IMR-90 (cell line): ENCODE measurements at regions of chr5 and their contacts with region 1.

Region 1: GRCh38 chr5:77143998-77144836 is 57.1 kb upstream of the ZBED3 start:
- DNase-seq: peak; percentile 79
- ATAC-seq: peak; percentile 98
- H3K4me3 ChIP-seq: no peak overlapping the region
- H3K27ac ChIP-seq: no peak overlapping the region
- H3K4me1 ChIP-seq: no peaks in the 10 kb centered on the region
- H3K27me3 ChIP-seq: peaks cover 2% of the 10 kb centered on the region; the same call in 1 of the 2 replicates
- CTCF ChIP-seq: peak; percentile 92
- POLR2A ChIP-seq: no peak
- RAD21 ChIP-seq: peak; percentile 95

Region 2: GRCh38 chr5:77239126-77239741 is 95.0 kb after region 1 on chr5:
- CTCF ChIA-PET with region 1: no interaction called
- POLR2A ChIA-PET with region 1: no interaction called
- dilution Hi-C with region 1: no loop called
- in situ Hi-C with region 1: no loop called
- intact Hi-C with region 1: loop called (anchors 1 kb)
- DNase-seq: no peak
- ATAC-seq: no peak
- H3K4me3 ChIP-seq: no peak overlapping the region
- H3K27ac ChIP-seq: no peak overlapping the region
- H3K4me1 ChIP-seq: no peaks in the 10 kb centered on the region
- H3K27me3 ChIP-seq: peaks cover 14% of the 10 kb centered on the region
- CTCF ChIP-seq: peak; percentile 26; the same call in 1 of the 2 replicates
- POLR2A ChIP-seq: no peak
- RAD21 ChIP-seq: peak; percentile 26

Region 3: DNA sequence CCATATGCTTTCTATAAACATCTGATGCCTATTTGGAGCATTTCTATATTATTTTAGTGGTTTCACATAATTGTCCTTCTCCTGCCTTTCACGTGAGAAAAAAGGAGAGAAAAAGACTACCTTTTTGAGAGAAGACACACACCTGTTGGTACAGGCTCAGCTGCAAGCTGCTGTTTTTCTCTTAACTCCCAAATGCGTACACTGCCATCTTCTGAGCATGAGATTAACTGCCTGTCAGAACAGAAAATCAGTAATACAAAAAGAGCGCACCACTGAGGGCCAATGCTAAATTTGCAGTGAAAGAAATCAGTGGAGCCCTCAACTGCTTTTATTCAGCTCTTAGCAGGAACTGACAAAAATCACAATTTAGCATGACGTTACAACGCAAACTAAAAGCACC is 293.0 kb after region 1 on chr5:
- CTCF ChIA-PET with region 1: no interaction called
- POLR2A ChIA-PET with region 1: no interaction called
- dilution Hi-C with region 1: no loop called
- in situ Hi-C with region 1: no loop called
- intact Hi-C with region 1: loop called (anchors 5 kb)
- DNase-seq: no peak
- ATAC-seq: no peak
- H3K4me3 ChIP-seq: no peak overlapping the region
- H3K27ac ChIP-seq: no peak overlapping the region
- H3K4me1 ChIP-seq: 0 out of 2 replicates have a peak, but pooled peaks cover 1% of the 10 kb centered on the region
- H3K27me3 ChIP-seq: no peaks in the 10 kb centered on the region
- CTCF ChIP-seq: no peak
- POLR2A ChIP-seq: no peak
- RAD21 ChIP-seq: no peak; the same call in 1 of the 2 replicates

Region 4: DNA sequence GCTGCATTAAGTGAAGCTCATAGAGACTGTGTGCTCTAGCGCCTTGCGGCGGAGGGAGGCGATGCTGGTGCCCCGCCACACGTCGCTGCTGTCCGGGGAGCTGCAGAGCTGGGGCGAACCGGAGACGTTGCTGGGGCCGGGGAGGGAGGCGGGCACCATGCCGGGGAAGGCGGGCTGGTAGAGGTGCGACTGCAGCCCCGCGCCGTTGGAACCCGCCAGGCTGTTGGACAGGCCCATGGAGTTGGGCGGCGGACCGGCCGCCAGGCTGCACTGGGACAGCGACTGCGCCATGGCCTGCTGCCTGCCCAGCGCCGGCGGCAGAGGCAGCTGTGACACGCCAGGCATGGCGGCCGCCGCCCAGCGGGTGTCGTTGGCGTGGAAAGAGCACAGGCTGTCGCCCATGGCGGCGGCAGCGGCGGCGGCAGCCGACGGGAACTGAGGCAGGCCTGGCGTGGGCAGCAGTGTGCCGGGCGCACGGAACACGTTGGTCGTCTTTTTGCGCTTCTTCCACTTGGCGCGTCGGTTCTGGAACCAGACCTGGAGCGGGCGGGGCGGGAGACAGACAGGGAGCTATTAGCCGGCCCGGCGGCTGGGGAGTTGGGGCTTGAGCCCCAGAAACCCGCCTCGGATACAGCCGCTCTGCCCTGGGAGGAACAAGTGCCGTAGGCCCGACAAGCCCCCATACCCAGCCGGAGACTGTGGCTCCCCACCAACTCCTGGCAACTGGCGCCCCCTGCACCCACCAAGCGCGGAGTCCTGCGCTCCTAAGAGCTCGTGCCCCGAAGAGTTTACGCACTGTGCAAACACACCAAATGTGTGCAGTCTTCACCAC is 486.3 kb after region 1 on chr5:
- CTCF ChIA-PET with region 1: no interaction called
- POLR2A ChIA-PET with region 1: no interaction called
- dilution Hi-C with region 1: no loop called
- in situ Hi-C with region 1: no loop called
- intact Hi-C with region 1: loop called (anchors 10 kb)
- DNase-seq: no peak
- ATAC-seq: peak; percentile 82
- H3K4me3 ChIP-seq: peak overlapping the region; percentile 38
- H3K27ac ChIP-seq: no peak overlapping the region
- H3K4me1 ChIP-seq: peaks cover 6% of the 10 kb centered on the region; the same call in 1 of the 2 replicates
- H3K27me3 ChIP-seq: peaks cover 77% of the 10 kb centered on the region
- CTCF ChIP-seq: no peak
- POLR2A ChIP-seq: no peak
- RAD21 ChIP-seq: no peak